Activated CD8-positive, alpha-beta T cell treated with anti-CD3 and anti-CD28 coated beads for 36 hours (primary cell): ENCODE measurements at regions of chr1 and their contacts with region 1.

Region 1: DNA sequence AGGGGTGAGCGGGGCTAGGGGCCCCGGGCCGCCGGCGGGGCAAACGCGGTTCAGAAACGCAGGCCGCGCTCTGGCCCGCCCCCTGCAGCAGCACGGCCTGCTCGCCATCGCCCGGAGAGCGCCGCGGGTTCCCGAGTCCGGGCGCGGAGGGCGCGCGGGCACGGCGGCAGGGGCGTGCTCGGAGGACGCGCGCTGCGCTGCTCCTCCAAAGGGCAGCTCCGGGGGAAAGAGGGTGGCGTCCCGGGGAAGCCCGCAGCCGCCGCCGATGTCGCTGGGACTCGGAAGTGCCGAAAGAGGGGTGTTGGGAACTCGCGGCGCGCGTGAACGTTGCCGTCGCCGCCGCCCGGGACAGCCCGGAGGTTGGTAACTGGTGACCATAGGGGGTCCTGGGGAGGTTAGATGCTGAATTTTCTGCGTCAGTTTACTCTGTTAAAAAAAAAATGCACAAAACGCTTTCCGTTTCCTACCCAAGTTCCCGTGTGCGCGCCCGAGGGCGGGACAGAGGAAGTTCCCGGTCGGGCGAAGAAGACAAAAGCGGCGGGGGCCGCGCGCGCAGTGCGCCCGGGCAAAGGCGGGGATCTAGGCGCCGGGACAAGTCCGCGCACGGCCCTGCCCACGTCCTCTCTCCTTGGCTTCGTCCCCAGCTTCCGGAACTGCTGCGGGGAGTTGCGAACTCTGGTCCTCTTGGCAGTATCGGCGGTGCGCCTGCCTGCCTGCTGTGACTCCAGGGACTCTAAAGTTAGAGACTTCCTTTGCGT is at the start of gene HHAT:
- DNase-seq: peak; percentile 75
- ATAC-seq: peak; percentile 67
- H3K4me3 Mint-ChIP-seq: peak within 1 kb of the TSS; percentile 87
- H3K27ac Mint-ChIP-seq: peak within 1 kb of the TSS; percentile 92
- H3K4me1 Mint-ChIP-seq: peaks cover 36% of the 10 kb centered on the region
- H3K27me3 Mint-ChIP-seq: peaks cover 5% of the 10 kb centered on the region
- CTCF ChIP-seq: no peak
- total RNA-seq, gene HHAT: 0.99 to 1.4 TPM

Region 2: GRCh38 chr1:210292231-210292871 is 36.6 kb before region 1 on chr1:
- CTCF ChIA-PET with region 1: no interaction called
- POLR2A ChIA-PET with region 1: no interaction called
- intact Hi-C with region 1: no loop called
- DNase-seq: peak; percentile 67
- ATAC-seq: peak; percentile 82
- H3K4me3 Mint-ChIP-seq: no peak overlapping the region
- H3K27ac Mint-ChIP-seq: no peak overlapping the region
- H3K4me1 Mint-ChIP-seq: no peaks in the 10 kb centered on the region
- H3K27me3 Mint-ChIP-seq: peaks cover 46% of the 10 kb centered on the region
- CTCF ChIP-seq: peak; percentile 30

Region 3: DNA sequence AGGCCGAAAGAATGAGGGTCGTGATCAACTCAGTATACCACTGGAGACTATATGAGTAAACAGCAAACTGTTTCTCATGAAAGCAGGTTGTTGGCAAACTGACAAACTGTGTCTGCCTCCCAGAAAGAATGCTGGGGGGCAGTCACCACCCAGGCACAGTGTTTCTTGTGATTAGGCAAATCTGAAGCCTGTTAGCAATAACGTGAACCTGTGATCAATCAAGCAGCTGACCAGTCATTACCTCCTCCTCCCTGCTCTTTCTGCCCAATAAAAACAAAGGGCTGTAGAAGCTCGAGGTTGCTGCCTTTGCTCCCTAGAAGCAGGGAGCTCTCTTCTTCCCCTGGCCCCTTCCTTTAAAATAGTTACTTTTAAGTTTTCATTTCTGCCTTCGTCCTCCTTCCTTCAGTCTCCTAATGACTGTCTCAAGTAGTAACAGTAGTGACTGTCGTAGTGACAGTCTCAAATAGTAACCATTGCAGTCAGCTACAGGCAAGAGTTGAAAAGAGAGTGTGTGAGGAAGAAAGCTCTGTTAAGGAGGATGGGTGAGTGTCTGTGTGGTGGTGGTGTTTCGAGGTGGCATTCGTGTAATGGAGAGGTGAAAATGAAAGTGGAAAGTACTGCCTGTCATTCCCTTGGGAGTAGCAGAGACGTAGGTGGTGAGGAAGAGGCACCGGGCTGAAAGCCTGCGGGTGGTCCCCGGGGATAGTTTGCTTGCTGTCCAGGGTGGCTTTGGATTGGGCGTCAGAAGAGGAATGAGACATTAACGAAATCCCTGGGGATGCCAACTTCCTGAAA is 14.3 kb after region 1 on chr1:
- CTCF ChIA-PET with region 1: interaction called, 13 read pairs
- POLR2A ChIA-PET with region 1: interaction called, 19 read pairs
- intact Hi-C with region 1: no loop called
- DNase-seq: no peak
- ATAC-seq: no peak
- H3K4me3 Mint-ChIP-seq: no peak overlapping the region
- H3K27ac Mint-ChIP-seq: no peak overlapping the region
- H3K4me1 Mint-ChIP-seq: peaks cover 40% of the 10 kb centered on the region
- H3K27me3 Mint-ChIP-seq: no peaks in the 10 kb centered on the region
- CTCF ChIP-seq: no peak

Region 4: GRCh38 chr1:210400043-210400840 is 71.3 kb after region 1 on chr1:
- CTCF ChIA-PET with region 1: interaction called, 17 read pairs
- POLR2A ChIA-PET with region 1: interaction called, 10 read pairs
- intact Hi-C with region 1: loop called (anchors 2 kb)
- DNase-seq: peak; percentile 85
- ATAC-seq: peak; percentile 77
- H3K4me3 Mint-ChIP-seq: peak overlapping the region; percentile 38
- H3K27ac Mint-ChIP-seq: peak overlapping the region; percentile 91
- H3K4me1 Mint-ChIP-seq: peaks cover 42% of the 10 kb centered on the region
- H3K27me3 Mint-ChIP-seq: peaks cover 2% of the 10 kb centered on the region
- CTCF ChIP-seq: peak; percentile 78